ENCODE measurements at regions of chr14 and their contacts with region 1.

Region 1: GRCh38 chr14:92951912-92952471 is 29.0 kb downstream of the CHGA start:
- DNase-seq: no peak
- H3K4me3 ChIP-seq: no peak overlapping the region
- CTCF ChIP-seq: peak; percentile 97

Region 2: GRCh38 chr14:92969871-92970270 is 17.9 kb after region 1 on chr14:
- CTCF ChIA-PET with region 1: interaction called, 36 read pairs
- POLR2A ChIA-PET with region 1: no interaction called
- DNase-seq: no peak
- H3K4me3 ChIP-seq: no peak overlapping the region
- CTCF ChIP-seq: no peak

Region 3: GRCh38 chr14:93137864-93138263 is 185.9 kb after region 1 on chr14:
- CTCF ChIA-PET with region 1: interaction called, 135 read pairs
- POLR2A ChIA-PET with region 1: no interaction called
- DNase-seq: no peak
- H3K4me3 ChIP-seq: no peak overlapping the region
- CTCF ChIP-seq: no peak

Region 4: GRCh38 chr14:93184388-93185353 is 232.7 kb after region 1 on chr14 and contains the starts of genes LYSET and MOAP1:
- CTCF ChIA-PET with region 1: interaction called, 33 read pairs
- POLR2A ChIA-PET with region 1: no interaction called
- DNase-seq: no peak
- H3K4me3 ChIP-seq: peak within 1 kb of the TSS; percentile 96
- CTCF ChIP-seq: peak; percentile 6

Measured in AG04449 (cell line).